Esophagus muscularis mucosa (tissue), 4 donors: ENCODE measurements at regions of chr10 and their contacts with region 1.

Region 1: GRCh38 chr10:120735773-120736371 is 115.3 kb upstream of the WDR11 start:
- DNase-seq: no peak
- H3K4me3 ChIP-seq: no peak overlapping the region
- H3K27ac ChIP-seq: no peak overlapping the region
- H3K4me1 ChIP-seq: no peaks in the 10 kb centered on the region
- H3K27me3 ChIP-seq: peaks cover 0 to 8% (median 0%) of the 10 kb centered on the region in 4 donors
- CTCF ChIP-seq: peak; percentile 37 to 54 (median 41)
- EP300 ChIP-seq: no peak
- POLR2A ChIP-seq: no peak

Region 2: DNA sequence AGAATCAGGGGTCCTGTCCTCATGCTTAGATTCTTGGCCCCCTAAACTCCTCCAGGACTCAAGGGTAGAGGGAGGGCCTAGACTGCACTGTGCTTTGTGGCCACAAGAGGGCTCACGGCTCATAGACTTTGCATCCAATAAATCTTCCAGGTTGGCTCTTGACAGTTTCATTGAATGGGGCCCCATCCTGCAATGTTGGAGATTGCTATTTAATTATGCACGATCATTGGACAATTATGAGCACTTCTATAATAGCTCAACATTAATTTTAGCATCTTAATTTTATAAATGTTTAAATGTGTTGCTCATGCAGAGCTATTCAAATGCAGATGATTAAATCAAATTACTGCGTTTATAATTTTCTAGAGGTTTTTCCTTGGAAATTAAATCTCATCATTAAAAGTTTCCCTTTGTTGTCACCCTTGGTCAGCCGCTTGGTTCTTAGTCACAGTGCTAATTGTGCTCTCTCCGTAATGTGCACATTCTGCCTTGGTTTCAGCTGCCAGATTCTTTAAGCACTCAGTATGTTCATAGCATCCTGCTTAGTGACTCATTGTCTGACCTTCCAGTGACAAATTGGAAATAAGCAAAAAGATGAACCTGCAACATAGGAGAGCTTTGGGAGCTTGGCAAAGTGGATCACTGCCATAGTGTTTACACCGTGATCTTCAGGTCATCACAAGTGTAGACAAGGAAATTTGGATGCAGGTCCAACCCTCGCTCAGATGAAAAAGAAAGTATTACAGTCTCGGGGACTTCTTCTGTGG is 312.3 kb before region 1 on chr10:
- intact Hi-C with region 1: loop called (anchors 10 kb)
- DNase-seq: no peak
- H3K4me3 ChIP-seq: no peak overlapping the region
- H3K27ac ChIP-seq: no peak overlapping the region
- H3K4me1 ChIP-seq: no peaks in the 10 kb centered on the region
- H3K27me3 ChIP-seq: no peaks in the 10 kb centered on the region
- CTCF ChIP-seq: peak; percentile 36 to 63 (median 48)
- EP300 ChIP-seq: no peak
- POLR2A ChIP-seq: no peak

Region 3: GRCh38 chr10:120508393-120508792 is 227.5 kb before region 1 on chr10:
- intact Hi-C with region 1: no loop called
- DNase-seq: no peak
- H3K4me3 ChIP-seq: no peak overlapping the region
- H3K27ac ChIP-seq: no peak overlapping the region
- H3K4me1 ChIP-seq: no peaks in the 10 kb centered on the region
- H3K27me3 ChIP-seq: peaks cover 0 to 12% (median 0%) of the 10 kb centered on the region in 4 donors
- CTCF ChIP-seq: no peak
- EP300 ChIP-seq: no peak
- POLR2A ChIP-seq: no peak

Region 4: GRCh38 chr10:120905268-120905667 is 169.4 kb after region 1 on chr10:
- intact Hi-C with region 1: no loop called
- DNase-seq: no peak
- H3K4me3 ChIP-seq: no peak overlapping the region
- H3K27ac ChIP-seq: no peak overlapping the region
- H3K4me1 ChIP-seq: no peaks in the 10 kb centered on the region
- H3K27me3 ChIP-seq: no peaks in the 10 kb centered on the region
- CTCF ChIP-seq: no peak
- EP300 ChIP-seq: no peak
- POLR2A ChIP-seq: no peak